Heart left ventricle (tissue), 16 donors: ENCODE measurements at regions of chr2 and their contacts with region 1.

Region 1: GRCh38 chr2:71331581-71332434 is at the start of gene ZNF638:
- DNase-seq: peak; percentile 94 to 97 (median 96)
- ATAC-seq: peak; percentile 98 to 99 (median 98)
- H3K4me3 ChIP-seq: peak within 1 kb of the TSS; percentile 64 to 99 (median 91)
- H3K27ac ChIP-seq: peak within 1 kb of the TSS; percentile 72 to 96 (median 92)
- H3K4me1 ChIP-seq: peaks cover 0 to 48% (median 37%) of the 10 kb centered on the region in 12 donors
- H3K27me3 ChIP-seq: no peaks in the 10 kb centered on the region
- CTCF ChIP-seq: peak; percentile 72 to 95 (median 85)
- POLR2A ChIP-seq: peak in 1 of 2 donors; percentile 80
- total RNA-seq, gene ZNF638: 61.1 to 100 (median 84.1) TPM

Region 2: DNA sequence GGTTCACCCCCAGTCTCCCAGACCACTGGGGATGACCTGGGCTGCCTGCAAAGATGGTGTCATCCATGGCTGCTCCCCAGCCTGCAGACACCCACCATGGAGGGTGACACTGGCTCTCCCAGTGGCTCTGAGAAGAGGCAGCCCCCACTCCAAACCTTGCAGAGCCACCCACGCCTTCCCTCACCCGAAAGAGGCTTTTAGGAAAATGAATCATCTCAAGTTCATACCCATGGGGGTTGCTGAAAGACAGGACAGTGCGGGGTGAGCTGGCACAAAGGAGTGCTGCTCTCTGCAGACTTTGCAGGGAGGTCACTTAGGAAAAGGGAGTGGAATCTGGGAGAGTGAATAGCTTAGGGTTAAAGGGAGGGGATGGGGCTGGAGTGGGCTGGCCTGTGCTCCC is 165.0 kb before region 1 on chr2:
- intact Hi-C with region 1: no loop called
- DNase-seq: no peak
- ATAC-seq: no peak
- H3K4me3 ChIP-seq: no peak overlapping the region
- H3K27ac ChIP-seq: no peak overlapping the region
- H3K4me1 ChIP-seq: no peaks in the 10 kb centered on the region
- H3K27me3 ChIP-seq: no peaks in the 10 kb centered on the region
- CTCF ChIP-seq: no peak
- POLR2A ChIP-seq: no peak

Region 3: DNA sequence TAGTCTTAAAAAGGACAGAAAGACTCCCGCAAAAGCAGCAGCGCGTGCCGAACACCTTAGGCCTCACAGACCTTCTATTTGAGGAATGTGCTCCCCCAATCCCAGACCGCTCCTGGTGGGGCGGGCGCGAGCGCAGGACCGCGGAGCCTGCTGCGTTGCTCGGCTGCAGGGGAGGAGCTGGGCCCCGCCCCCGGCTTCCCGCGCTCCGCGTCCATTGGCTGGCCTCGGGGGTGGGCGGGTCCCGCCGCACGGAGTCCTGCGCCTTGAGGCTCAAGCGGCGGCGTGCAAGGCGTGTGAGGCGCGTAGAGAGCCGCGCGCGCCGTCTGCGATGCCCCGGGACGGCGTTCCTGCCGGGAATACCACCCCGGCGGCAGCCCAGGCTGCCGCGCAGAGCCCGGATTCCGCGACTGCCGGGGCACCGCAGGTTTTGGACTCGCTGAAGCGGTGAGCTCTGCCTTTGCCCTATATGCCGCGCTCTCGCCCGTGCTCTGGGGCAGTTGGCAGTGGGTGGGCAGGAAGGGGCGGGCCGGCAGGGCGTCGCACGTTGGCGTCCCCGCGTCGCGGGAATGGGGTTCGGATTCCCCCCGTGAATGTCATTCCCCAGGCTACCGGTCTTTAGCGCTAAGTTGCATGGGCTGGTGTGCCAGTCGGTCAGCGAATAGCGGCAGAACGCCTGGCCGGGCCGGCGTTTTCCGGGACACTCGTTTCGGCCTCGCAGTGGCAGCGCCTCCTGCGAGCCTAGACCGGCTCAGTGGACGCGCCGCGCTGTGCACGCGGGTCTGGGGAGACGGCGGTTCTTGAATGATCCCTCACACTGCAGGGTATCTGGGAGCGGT is 55.3 kb before region 1 on chr2:
- intact Hi-C with region 1: loop called in 4 of 10 experiments (anchors 5 to 10 kb)
- DNase-seq: peak; percentile 91 to 95 (median 94)
- ATAC-seq: peak; percentile 89 to 99 (median 96)
- H3K4me3 ChIP-seq: peak overlapping the region; percentile 37 to 83 (median 64)
- H3K27ac ChIP-seq: peak overlapping the region; percentile 62 to 94 (median 89)
- H3K4me1 ChIP-seq: peaks cover 0 to 40% (median 17%) of the 10 kb centered on the region in 12 donors
- H3K27me3 ChIP-seq: peaks cover 0 to 14% (median 0%) of the 10 kb centered on the region in 9 donors
- CTCF ChIP-seq: peak in 3 of 12 donors; percentile 13 to 15 (median 14)
- POLR2A ChIP-seq: peak; percentile 68 to 94

Region 4: DNA sequence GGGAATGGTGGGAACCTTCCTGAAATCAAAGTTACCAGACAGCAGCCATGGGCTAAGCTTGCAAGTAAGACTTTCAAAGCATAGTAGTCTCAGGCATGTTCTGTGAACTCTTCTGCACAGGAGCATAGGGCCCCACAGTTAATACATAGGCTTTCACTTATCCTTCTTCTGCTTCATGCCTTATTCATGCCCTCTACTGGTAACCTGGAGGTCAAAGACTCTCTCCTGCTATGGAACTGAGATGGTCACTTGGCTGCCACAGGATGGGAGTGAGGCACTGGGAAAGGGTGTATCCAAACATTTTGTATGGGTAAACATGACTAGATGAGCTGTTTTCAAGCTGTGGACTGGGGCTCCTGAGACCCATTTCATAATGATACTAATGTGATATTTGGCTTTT is 49.3 kb before region 1 on chr2:
- intact Hi-C with region 1: loop called in 4 of 10 experiments (anchors 5 to 10 kb)
- DNase-seq: no peak
- ATAC-seq: peak; percentile 4 to 59 (median 23)
- H3K4me3 ChIP-seq: no peak overlapping the region
- H3K27ac ChIP-seq: peak overlapping the region in 11 of 12 donors; percentile 27 to 92 (median 56)
- H3K4me1 ChIP-seq: peaks cover 0 to 53% (median 24%) of the 10 kb centered on the region in 12 donors
- H3K27me3 ChIP-seq: no peaks in the 10 kb centered on the region
- CTCF ChIP-seq: peak in 2 of 12 donors; percentile 9 to 22
- POLR2A ChIP-seq: no peak

Region 5: DNA sequence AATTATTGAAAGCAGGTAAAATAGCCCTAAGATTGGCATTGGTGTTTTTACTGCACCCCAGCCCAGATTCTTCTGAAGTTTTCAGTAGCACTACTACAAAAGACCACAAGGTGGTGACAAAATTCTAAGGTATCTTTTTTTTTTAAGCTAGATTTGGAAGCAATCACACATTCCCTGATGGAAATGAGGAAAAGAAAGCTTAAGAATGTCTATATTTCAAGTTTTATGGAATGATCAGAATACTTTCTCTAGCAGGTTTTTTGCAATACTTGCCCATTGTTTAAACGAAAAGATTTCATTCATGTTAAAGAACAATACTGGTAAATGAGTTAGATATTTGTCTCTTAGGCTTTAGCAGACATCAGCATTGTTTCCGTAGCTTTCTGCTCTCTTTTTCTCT is 32.3 kb before region 1 on chr2:
- intact Hi-C with region 1: loop called in 1 of 10 experiments (anchors 1 kb)
- DNase-seq: no peak
- ATAC-seq: no peak
- H3K4me3 ChIP-seq: no peak overlapping the region
- H3K27ac ChIP-seq: no peak overlapping the region
- H3K4me1 ChIP-seq: peaks cover 0 to 8% (median 0%) of the 10 kb centered on the region in 12 donors
- H3K27me3 ChIP-seq: no peaks in the 10 kb centered on the region
- CTCF ChIP-seq: peak; percentile 55 to 78 (median 69)
- POLR2A ChIP-seq: no peak